ENCODE measurements at regions of chr14 and their contacts with region 1.

Region 1: GRCh38 chr14:102235275-102235897 is 69.6 kb downstream of the MOK start:
- DNase-seq: peak; percentile 88
- H3K4me3 Mint-ChIP-seq: no peak overlapping the region
- H3K27ac Mint-ChIP-seq: no peak overlapping the region
- H3K4me1 Mint-ChIP-seq: no peaks in the 10 kb centered on the region
- H3K27me3 Mint-ChIP-seq: no peaks in the 10 kb centered on the region

Region 2: GRCh38 chr14:102131746-102132145 is 103.6 kb before region 1 on chr14:
- CTCF ChIA-PET with region 1: no interaction called
- intact Hi-C with region 1: no loop called
- DNase-seq: no peak
- H3K4me3 Mint-ChIP-seq: no peak overlapping the region
- H3K27ac Mint-ChIP-seq: no peak overlapping the region
- H3K4me1 Mint-ChIP-seq: no peaks in the 10 kb centered on the region
- H3K27me3 Mint-ChIP-seq: no peaks in the 10 kb centered on the region

Region 3: GRCh38 chr14:102200690-102201352 is 34.6 kb before region 1 on chr14:
- CTCF ChIA-PET with region 1: no interaction called
- intact Hi-C with region 1: no loop called
- DNase-seq: peak; percentile 20
- H3K4me3 Mint-ChIP-seq: no peak overlapping the region
- H3K27ac Mint-ChIP-seq: peak overlapping the region; percentile 2
- H3K4me1 Mint-ChIP-seq: peaks cover 61% of the 10 kb centered on the region
- H3K27me3 Mint-ChIP-seq: no peaks in the 10 kb centered on the region

Region 4: GRCh38 chr14:102516531-102517415 is 281.4 kb after region 1 on chr14:
- CTCF ChIA-PET with region 1: interaction called, 4 read pairs
- intact Hi-C with region 1: loop called (anchors 5 kb)
- DNase-seq: peak; percentile 48
- H3K4me3 Mint-ChIP-seq: peak overlapping the region; percentile 70
- H3K27ac Mint-ChIP-seq: no peak overlapping the region
- H3K4me1 Mint-ChIP-seq: peaks cover 5% of the 10 kb centered on the region
- H3K27me3 Mint-ChIP-seq: peaks cover 3% of the 10 kb centered on the region